ENCODE measurements at regions of chr9 and their contacts with region 1.

Region 1: GRCh38 chr9:6412487-6413364 is at the start of gene UHRF2:
- DNase-seq: peak; percentile 90 to 99
- ATAC-seq: peak; percentile 90 to 97 (median 92)
- H3K4me3 ChIP-seq: peak within 1 kb of the TSS; percentile 94
- H3K4me3 Mint-ChIP-seq: peak within 1 kb of the TSS; percentile 92
- H3K27ac ChIP-seq: peak within 1 kb of the TSS; percentile 80
- H3K27ac Mint-ChIP-seq: peak within 1 kb of the TSS; percentile 85 to 86
- H3K4me1 ChIP-seq: peaks cover 16% of the 10 kb centered on the region
- H3K4me1 Mint-ChIP-seq: peaks cover 29 to 35% of the 10 kb centered on the region in 2 donors
- H3K27me3 ChIP-seq: no peaks in the 10 kb centered on the region
- H3K27me3 Mint-ChIP-seq: no peaks in the 10 kb centered on the region
- CTCF ChIP-seq: no peak
- total RNA-seq, gene UHRF2: 118 to 130 (median 120) TPM

Region 2: GRCh38 chr9:6008169-6008979 is 404.4 kb before region 1 on chr9:
- intact Hi-C with region 1: loop called (anchors 2 kb)
- DNase-seq: peak; percentile 85 to 99
- ATAC-seq: peak; percentile 77 to 89 (median 79)
- H3K4me3 ChIP-seq: peak overlapping the region; percentile 84
- H3K4me3 Mint-ChIP-seq: peak overlapping the region; percentile 81
- H3K27ac ChIP-seq: peak overlapping the region; percentile 92
- H3K27ac Mint-ChIP-seq: peak overlapping the region; percentile 92 to 93
- H3K4me1 ChIP-seq: peaks cover 7% of the 10 kb centered on the region
- H3K4me1 Mint-ChIP-seq: peaks cover 46 to 58% of the 10 kb centered on the region in 2 donors
- H3K27me3 ChIP-seq: no peaks in the 10 kb centered on the region
- H3K27me3 Mint-ChIP-seq: no peaks in the 10 kb centered on the region
- CTCF ChIP-seq: no peak

Region 3: DNA sequence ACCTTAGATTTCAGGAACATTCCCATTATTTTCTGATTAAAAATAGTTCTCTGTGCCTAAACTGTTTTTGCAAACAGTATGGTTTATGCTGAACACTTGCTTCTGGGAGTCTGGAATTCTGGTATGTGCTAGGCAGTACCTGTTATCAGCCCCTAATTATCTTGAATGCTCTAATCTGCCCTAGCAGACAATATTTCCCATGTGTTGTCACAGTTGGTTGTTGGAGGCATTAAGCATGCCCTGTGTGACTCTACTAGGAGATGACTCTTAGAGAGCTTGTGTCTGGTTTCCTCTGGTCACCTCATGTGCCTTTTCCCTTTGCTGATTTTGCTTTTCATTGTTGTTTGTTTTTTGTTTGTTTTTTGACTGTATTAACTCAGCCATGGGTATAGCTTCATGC is 36.9 kb after region 1 on chr9:
- intact Hi-C with region 1: loop called (anchors 5 kb)
- DNase-seq: no peak
- ATAC-seq: no peak
- H3K4me3 ChIP-seq: no peak overlapping the region
- H3K4me3 Mint-ChIP-seq: no peak overlapping the region
- H3K27ac ChIP-seq: no peak overlapping the region
- H3K27ac Mint-ChIP-seq: peak overlapping the region; percentile 28 to 33
- H3K4me1 ChIP-seq: peaks cover 2% of the 10 kb centered on the region
- H3K4me1 Mint-ChIP-seq: peaks cover 62 to 68% of the 10 kb centered on the region in 2 donors
- H3K27me3 ChIP-seq: no peaks in the 10 kb centered on the region
- H3K27me3 Mint-ChIP-seq: no peaks in the 10 kb centered on the region
- CTCF ChIP-seq: no peak

Region 4: DNA sequence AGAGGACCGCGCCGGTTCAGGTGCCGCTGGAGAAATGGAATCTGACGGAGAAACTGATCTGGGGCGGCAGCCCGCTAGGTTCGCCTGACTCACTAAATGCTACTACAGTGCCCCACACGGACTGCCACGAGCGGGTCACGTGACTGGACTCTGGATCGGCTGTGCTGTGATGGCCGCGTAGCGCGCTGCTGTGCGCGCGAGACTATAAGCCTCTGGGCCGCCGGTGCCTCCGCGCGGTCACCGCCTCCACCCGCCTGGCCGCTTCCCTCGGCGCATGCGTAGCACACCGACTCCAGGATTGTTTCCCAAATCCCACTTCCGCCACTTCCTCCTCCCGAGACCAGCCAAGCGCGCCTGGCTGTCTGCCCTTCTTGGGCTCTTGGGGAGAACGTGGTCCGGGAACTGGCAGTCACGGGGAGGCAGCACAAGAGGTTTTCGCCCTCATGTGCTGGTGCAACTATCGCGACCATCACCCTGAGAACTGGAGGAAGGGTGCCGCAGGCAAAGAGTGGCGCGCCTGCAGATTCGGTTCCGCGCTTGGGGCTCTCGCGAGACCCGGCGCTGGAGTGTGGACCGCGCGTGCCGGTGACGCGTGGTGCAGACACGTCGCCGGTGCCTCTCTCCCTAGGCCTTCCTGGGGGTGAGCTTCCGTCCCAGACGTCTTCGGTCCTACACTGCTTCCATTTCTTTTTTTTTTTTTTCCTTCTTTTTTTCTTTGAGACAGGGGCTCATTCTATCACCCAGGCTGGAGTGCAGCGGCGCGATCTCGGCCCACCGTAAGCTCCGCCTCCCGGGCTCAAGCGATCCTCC is 268.6 kb after region 1 on chr9:
- intact Hi-C with region 1: loop called (anchors 1 kb)
- DNase-seq: peak; percentile 79 to 96
- ATAC-seq: peak; percentile 85 to 95 (median 89)
- H3K4me3 ChIP-seq: peak overlapping the region; percentile 89
- H3K4me3 Mint-ChIP-seq: peak overlapping the region; percentile 96
- H3K27ac ChIP-seq: peak overlapping the region; percentile 97
- H3K27ac Mint-ChIP-seq: peak overlapping the region; percentile 97 to 98
- H3K4me1 ChIP-seq: peaks cover 16% of the 10 kb centered on the region
- H3K4me1 Mint-ChIP-seq: peaks cover 23 to 24% of the 10 kb centered on the region in 2 donors
- H3K27me3 ChIP-seq: no peaks in the 10 kb centered on the region
- H3K27me3 Mint-ChIP-seq: no peaks in the 10 kb centered on the region
- CTCF ChIP-seq: no peak

Measured in natural killer cell (primary cell).